ENCODE measurements at regions of chr1 and their contacts with region 1.

Region 1: DNA sequence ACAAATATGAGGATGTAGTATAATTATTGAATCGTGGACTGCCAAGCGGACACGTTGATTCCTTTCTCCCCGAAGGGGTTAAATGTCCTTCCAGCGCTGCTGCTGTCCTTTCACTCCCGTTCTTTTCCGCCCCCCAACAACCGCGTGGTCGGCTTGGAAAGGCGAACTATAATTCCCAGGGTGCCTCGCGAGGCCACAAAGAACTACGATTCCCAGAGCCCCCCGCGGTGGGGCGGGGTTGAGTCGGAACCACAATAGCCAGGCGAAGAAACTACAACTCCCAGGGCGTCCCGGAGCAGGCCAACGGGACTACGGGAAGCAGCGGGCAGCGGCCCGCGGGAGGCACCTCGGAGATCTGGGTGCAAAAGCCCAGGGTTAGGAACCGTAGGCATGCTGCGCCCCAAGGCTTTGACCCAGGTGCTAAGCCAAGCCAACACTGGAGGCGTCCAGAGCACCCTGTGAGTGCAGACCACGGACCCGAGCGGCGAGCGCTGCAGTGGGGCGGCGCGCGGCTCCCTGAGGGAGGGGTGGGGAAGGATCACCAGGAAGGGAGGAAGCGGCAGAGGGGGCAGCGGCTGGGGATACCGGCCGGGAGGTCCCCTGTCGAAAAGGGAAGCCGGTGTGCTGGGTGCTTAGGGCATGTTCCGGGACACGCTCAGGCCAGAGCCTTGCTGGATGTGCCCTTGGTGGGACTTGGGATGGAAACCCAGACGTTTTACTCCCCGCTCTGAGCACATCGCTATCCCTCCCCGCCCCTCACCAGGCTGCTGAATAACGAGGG is at the start of gene LAMTOR2:
- DNase-seq: peak; percentile 98
- ATAC-seq: peak; percentile 82
- H3K4me3 Mint-ChIP-seq: peak within 1 kb of the TSS; percentile 92
- H3K27ac Mint-ChIP-seq: peak within 1 kb of the TSS; percentile 88
- H3K4me1 Mint-ChIP-seq: peaks cover 18% of the 10 kb centered on the region
- H3K27me3 Mint-ChIP-seq: no peaks in the 10 kb centered on the region
- total RNA-seq, gene LAMTOR2: 26.1 to 50.3 TPM

Region 2: DNA sequence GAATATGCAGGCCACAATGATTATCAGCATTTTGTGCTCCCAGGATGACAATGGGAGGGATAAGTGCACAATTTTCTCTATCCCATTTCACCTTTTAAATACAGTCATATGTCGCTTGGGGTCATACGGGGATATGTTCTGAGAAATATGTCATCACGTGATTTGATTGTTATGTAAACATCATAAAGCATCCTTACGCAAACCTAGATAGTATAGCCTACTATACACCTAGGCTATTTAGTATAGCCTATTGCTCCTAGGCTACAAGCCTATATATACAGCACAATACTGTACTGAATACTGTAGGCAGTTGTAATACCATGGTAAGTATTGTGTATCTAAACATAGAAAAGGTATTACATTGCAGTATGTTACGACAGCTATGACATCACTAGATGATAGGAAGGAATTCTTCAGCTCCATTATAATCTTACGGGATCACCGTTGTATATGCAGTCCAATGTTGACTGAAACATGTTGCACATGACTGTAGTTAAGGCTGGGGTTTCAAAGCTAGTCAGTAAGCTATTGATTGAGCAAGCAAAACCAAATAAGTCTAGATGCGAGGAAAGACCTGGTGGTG is 715.1 kb before region 1 on chr1:
- CTCF ChIA-PET with region 1: no interaction called
- POLR2A ChIA-PET with region 1: no interaction called
- intact Hi-C with region 1: no loop called
- DNase-seq: no peak
- ATAC-seq: no peak
- H3K4me3 Mint-ChIP-seq: no peak overlapping the region
- H3K27ac Mint-ChIP-seq: no peak overlapping the region
- H3K4me1 Mint-ChIP-seq: peaks cover 6% of the 10 kb centered on the region
- H3K27me3 Mint-ChIP-seq: no peaks in the 10 kb centered on the region

Region 3: DNA sequence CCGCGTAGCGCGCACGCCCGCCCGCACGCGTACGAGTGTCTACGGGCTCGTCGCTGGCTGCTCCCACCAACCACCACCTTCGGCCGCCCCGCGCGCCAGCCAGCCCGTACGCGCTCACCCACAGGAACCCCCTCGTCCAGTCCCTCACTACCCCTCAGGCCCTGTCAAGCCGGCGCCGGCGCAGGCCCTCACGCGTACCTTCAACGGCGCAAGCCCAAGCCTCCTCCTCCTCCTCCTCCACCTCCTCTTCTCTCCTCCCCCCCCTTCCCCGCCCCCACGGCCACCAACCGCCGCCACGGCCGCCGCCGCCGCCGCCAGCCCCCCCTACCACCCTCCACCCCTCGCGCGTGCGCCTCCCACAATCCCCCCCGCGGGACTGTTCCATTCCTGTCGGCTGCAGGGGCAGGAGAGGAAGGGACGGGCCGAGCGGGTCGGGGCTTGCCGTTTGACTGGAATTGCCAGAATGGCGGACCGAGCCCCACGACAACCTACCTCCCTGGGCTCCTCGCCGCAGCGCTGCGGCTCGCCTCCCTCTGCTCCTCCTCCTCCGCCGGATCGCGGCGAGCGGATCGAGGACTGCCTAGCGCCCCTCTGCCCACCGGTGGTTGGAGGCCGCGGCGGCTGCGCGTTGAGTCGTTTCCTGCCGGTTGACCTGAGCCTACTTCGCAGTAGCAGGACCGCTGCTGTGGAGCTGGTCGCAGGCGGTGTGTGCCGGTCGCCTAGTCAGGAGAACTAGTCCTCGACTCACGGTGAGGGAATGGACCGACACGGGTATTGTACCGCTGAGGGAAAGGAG is 491.9 kb before region 1 on chr1 and contains the start of gene ASH1L:
- CTCF ChIA-PET with region 1: no interaction called
- POLR2A ChIA-PET with region 1: no interaction called
- intact Hi-C with region 1: loop called in 1 of 2 experiments (anchors 5 kb)
- DNase-seq: peak; percentile 96
- ATAC-seq: peak; percentile 83
- H3K4me3 Mint-ChIP-seq: peak within 1 kb of the TSS; percentile 90
- H3K27ac Mint-ChIP-seq: peak within 1 kb of the TSS; percentile 99
- H3K4me1 Mint-ChIP-seq: peaks cover 46% of the 10 kb centered on the region
- H3K27me3 Mint-ChIP-seq: no peaks in the 10 kb centered on the region
- total RNA-seq, gene ASH1L: 28.1 to 31.4 TPM

Region 4: GRCh38 chr1:155934097-155934935 is 120.4 kb before region 1 on chr1 and contains the start of gene KHDC4:
- CTCF ChIA-PET with region 1: interaction called, 4 read pairs
- POLR2A ChIA-PET with region 1: no interaction called
- intact Hi-C with region 1: loop called (anchors 1 kb)
- DNase-seq: peak; percentile 97
- ATAC-seq: peak; percentile 97
- H3K4me3 Mint-ChIP-seq: no peak within 1 kb of the TSS
- H3K27ac Mint-ChIP-seq: no peak within 1 kb of the TSS
- H3K4me1 Mint-ChIP-seq: peaks cover 46% of the 10 kb centered on the region
- H3K27me3 Mint-ChIP-seq: no peaks in the 10 kb centered on the region
- total RNA-seq, gene KHDC4: 68.7 to 97.5 TPM

Region 5: DNA sequence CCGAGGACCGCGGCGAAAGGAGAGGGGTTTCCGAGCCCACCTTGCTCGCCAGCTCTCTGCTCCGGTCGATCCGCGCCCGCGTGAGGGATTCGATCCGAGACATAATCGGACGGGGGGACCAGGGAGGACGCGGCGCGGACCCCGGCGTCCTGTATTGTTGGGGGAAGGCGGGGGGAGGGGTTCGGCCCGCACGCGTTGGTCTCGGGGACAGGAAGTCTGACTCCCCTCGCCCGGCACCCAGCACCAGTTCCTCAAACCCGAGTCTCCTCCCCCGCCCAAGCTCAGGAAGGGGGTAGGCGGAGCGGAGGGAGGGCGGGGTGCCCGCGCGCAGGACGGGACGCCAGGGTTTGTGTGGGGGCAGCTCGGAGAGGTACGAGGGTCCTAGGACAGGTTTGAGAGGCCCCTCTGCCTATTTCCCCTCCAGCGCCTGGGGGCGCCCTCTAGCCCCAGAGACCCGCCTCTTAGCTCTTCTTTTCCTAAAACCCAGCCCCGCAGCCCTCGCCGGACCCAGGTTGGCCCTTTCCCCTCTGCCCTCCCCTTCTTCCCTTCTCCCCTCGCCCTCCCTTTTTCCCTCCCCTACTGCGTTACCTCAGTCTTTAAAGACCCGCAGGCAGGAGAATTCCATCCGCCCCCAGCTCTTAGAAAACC is 76.2 kb before region 1 on chr1 and contains the start of gene ARHGEF2:
- CTCF ChIA-PET with region 1: no interaction called
- POLR2A ChIA-PET with region 1: no interaction called
- intact Hi-C with region 1: loop called (anchors 2 kb)
- DNase-seq: peak; percentile 88
- ATAC-seq: peak; percentile 57
- H3K4me3 Mint-ChIP-seq: peak within 1 kb of the TSS; percentile 100
- H3K27ac Mint-ChIP-seq: peak within 1 kb of the TSS; percentile 96
- H3K4me1 Mint-ChIP-seq: peaks cover 68% of the 10 kb centered on the region
- H3K27me3 Mint-ChIP-seq: no peaks in the 10 kb centered on the region
- total RNA-seq, gene ARHGEF2: 135 to 216 TPM

Region 6: DNA sequence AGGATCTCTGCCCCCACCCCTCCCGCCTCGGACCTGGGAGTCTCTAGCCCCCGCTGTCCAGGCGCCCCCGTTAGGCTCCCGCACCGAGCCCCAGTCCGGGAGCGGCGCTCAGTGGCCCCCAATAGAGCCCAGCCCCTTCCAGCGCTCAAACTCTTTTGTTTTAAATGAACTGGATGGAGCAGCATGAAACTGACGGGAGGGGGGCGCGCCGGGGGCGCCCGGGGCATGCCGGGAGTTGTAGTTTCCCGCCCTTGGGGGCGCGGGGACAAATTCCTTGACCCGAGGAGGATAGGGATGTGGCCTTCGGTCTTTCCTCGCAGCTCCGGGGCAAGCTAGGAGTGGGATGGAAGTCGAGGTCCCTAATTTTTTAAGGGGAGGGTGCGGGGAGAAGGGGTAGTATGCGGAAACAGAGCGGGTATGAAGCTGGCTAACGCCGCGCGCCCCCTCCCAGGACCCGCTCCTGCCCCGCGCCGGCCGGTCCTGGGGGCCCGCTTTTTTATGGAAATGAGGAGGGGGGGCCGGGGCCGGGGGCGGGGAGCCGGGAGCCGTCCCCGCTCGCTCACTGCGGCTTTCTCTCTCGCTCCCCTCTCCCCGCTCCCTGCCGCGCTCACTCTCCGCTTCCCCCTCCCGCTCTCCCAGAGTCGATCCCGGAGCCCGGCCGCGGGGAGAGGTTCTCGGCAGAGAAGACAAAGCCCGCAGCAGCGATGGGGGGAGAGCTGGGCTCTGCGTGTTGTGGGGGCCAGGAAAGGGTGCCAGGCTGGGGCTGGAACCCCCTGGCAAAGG is 27.8 kb after region 1 on chr1 and contains the start of gene MEX3A:
- CTCF ChIA-PET with region 1: no interaction called
- POLR2A ChIA-PET with region 1: no interaction called
- intact Hi-C with region 1: loop called in 1 of 2 experiments (anchors 1 kb)
- DNase-seq: peak; percentile 80
- ATAC-seq: peak; percentile 89
- H3K4me3 Mint-ChIP-seq: peak within 1 kb of the TSS; percentile 72
- H3K27ac Mint-ChIP-seq: no peak within 1 kb of the TSS
- H3K4me1 Mint-ChIP-seq: peaks cover 5% of the 10 kb centered on the region
- H3K27me3 Mint-ChIP-seq: peaks cover 26% of the 10 kb centered on the region
- total RNA-seq, gene MEX3A: 0.48 to 0.79 TPM

Region 7: GRCh38 chr1:156193488-156194299 is 139.0 kb after region 1 on chr1 and contains the start of gene SLC25A44:
- CTCF ChIA-PET with region 1: no interaction called
- POLR2A ChIA-PET with region 1: no interaction called
- intact Hi-C with region 1: loop called in 1 of 2 experiments (anchors 1 kb)
- DNase-seq: peak; percentile 98
- ATAC-seq: peak; percentile 96
- H3K4me3 Mint-ChIP-seq: peak within 1 kb of the TSS; percentile 100
- H3K27ac Mint-ChIP-seq: peak within 1 kb of the TSS; percentile 97
- H3K4me1 Mint-ChIP-seq: peaks cover 43% of the 10 kb centered on the region
- H3K27me3 Mint-ChIP-seq: no peaks in the 10 kb centered on the region
- total RNA-seq, gene SLC25A44: 42.4 to 51.9 TPM